Posterior vena cava (tissue), 2 donors: ENCODE measurements at regions of chr6 and their contacts with region 1.

Region 1: DNA sequence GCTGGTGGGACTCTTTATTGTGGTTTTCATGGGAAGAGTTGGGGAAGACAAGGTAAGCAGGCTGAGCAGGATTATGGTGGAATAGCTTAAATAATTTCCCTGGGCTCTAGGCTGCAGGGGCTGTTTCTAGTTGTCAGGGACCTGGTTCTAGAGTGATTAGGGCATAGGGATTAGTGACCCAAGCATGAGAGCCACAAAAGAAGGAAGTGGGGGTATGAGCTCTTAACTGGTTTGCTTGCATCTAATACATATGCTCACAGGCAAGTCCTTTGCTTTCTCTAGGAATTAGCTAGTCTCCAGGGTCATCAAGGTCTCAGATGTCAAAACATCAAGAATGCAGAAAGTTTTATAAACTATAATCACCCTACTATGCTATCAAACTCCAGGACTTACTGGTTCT is 67.5 kb upstream of the NRN1 start:
- DNase-seq: no peak

Region 2: DNA sequence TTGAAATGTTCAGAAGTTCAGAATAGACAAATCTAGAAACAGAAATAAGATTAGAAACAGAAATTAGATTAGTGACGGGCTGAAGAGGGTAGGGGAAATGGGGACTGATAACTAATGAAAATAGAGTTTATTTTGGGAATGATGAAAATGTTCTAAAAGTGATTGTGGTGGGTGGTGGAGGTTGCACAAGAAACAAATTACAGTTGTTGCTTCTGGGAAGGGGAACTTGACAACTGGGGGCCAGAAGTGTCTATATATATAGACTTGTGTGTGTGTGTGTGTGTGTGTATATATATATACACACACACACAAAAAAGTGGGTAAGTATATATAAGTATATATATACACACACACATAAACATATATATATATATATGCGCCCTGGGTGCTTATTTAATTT is 947.1 kb after region 1 on chr6:
- intact Hi-C with region 1: loop called in 1 of 2 experiments (anchors 5 kb)
- DNase-seq: no peak